Activated CD4-positive, alpha-beta T cell treated with anti-CD3 and anti-CD28 coated beads, Interleukin-2, amount 10 ng/mL, durations not matched to agents 24 days and 14 days (primary cell): ENCODE measurements at regions of chr16 and their contacts with region 1.

Region 1: GRCh38 chr16:75206749-75207451 is at the start of gene CTRB2:
- DNase-seq: no peak
- H3K4me3 Mint-ChIP-seq: no peak within 1 kb of the TSS
- H3K27ac Mint-ChIP-seq: no peak within 1 kb of the TSS
- H3K4me1 Mint-ChIP-seq: no peaks in the 10 kb centered on the region
- H3K27me3 Mint-ChIP-seq: no peaks in the 10 kb centered on the region
- total RNA-seq, gene CTRB2: not detected in 2 replicates

Region 2: GRCh38 chr16:75224306-75225091 is 17.6 kb after region 1 on chr16:
- intact Hi-C with region 1: loop called (anchors 2 kb)
- DNase-seq: no peak
- H3K4me3 Mint-ChIP-seq: no peak overlapping the region
- H3K27ac Mint-ChIP-seq: no peak overlapping the region
- H3K4me1 Mint-ChIP-seq: peaks cover 4% of the 10 kb centered on the region
- H3K27me3 Mint-ChIP-seq: no peaks in the 10 kb centered on the region

Region 3: GRCh38 chr16:75254359-75254843 is 47.5 kb after region 1 on chr16:
- intact Hi-C with region 1: no loop called
- DNase-seq: no peak
- H3K4me3 Mint-ChIP-seq: no peak overlapping the region
- H3K27ac Mint-ChIP-seq: no peak overlapping the region
- H3K4me1 Mint-ChIP-seq: peaks cover 2% of the 10 kb centered on the region
- H3K27me3 Mint-ChIP-seq: peaks cover 38% of the 10 kb centered on the region